Dorsolateral prefrontal cortex (tissue), 120 donors: ENCODE measurements at regions of chr5 and their contacts with region 1.

Region 1: GRCh38 chr5:14399054-14399692 is 182.4 kb upstream of the OTULINL start:
- DNase-seq: peak in 1 of 10 donors; percentile 34
- H3K4me3 ChIP-seq: no peak overlapping the region
- H3K27ac ChIP-seq: peak overlapping the region in 3 of 59 donors; percentile 1 to 38 (median 9)
- H3K27me3 ChIP-seq: no peaks in the 10 kb centered on the region
- CTCF ChIP-seq: peak; percentile 51 to 85 (median 74)

Region 2: GRCh38 chr5:13427871-13428725 is 971.1 kb before region 1 on chr5:
- intact Hi-C with region 1: no loop called
- DNase-seq: no peak
- H3K4me3 ChIP-seq: no peak overlapping the region
- H3K27ac ChIP-seq: no peak overlapping the region
- H3K27me3 ChIP-seq: no peaks in the 10 kb centered on the region
- CTCF ChIP-seq: no peak

Region 3: DNA sequence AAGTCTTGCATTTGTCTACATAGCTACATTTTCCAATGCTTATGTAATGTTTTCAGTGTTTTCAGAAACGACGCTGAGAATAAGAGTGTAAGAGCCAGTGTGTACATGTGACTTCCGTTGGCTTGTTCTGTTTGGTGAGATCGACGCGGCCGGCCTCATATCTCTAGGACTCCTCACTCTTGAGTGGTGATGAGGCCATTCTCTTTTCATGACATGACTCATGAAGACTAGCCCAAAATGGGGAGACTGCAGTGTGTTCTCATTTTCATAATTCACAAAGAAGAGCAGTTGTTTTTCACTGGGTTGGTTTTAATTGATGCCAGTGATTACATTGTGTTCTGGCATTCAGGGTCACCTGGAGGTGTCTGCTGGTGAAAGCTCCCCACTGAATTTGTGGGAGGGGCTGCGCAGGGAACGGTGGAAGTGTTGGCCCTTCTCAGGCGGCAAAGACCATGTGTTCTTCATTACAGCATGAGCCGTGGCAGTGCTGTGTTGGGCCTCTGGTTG is 50.9 kb after region 1 on chr5:
- intact Hi-C with region 1: loop called in 1 of 2 experiments (anchors 5 kb)
- DNase-seq: peak in 3 of 10 donors; percentile 34 to 74 (median 62)
- H3K4me3 ChIP-seq: peak overlapping the region in 3 of 59 donors; percentile 1 to 8 (median 3)
- H3K27ac ChIP-seq: peak overlapping the region in 53 of 59 donors; percentile 7 to 85 (median 62)
- H3K27me3 ChIP-seq: no peaks in the 10 kb centered on the region
- CTCF ChIP-seq: no peak